ENCODE measurements at regions of chrX and their contacts with region 1.

Region 1: GRCh38 chrX:51743179-51743957 is at the start of gene GSPT2:
- DNase-seq: peak; percentile 83
- ATAC-seq: peak; percentile 97
- H3K4me3 Mint-ChIP-seq: peak within 1 kb of the TSS; percentile 85
- H3K27ac Mint-ChIP-seq: peak within 1 kb of the TSS; percentile 86
- H3K4me1 Mint-ChIP-seq: peaks cover 22% of the 10 kb centered on the region
- H3K27me3 Mint-ChIP-seq: no peaks in the 10 kb centered on the region
- total RNA-seq, gene GSPT2: 11.2 to 11.6 TPM

Region 2: DNA sequence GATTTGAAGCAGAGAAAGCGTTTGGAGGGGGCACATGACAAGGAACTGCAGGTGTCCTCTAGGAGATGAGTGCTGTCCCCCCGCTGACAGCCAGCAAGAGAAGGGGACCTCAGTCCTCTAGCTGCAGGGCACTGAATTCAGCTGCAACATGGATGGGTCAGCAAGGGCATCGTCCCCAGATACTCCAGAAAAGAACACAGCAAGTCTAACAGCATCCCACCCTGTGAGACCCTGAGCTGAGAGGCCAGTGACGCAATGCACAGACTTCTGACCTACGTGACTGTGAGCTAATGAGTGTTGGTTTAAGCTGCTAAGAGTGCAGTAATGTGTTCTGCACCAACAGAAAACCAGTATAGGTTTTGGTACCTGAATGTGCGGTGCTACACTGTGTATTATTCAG is 49.1 kb before region 1 on chrX:
- CTCF ChIA-PET with region 1: no interaction called
- POLR2A ChIA-PET with region 1: no interaction called
- intact Hi-C with region 1: no loop called
- DNase-seq: no peak
- ATAC-seq: no peak
- H3K4me3 Mint-ChIP-seq: no peak overlapping the region
- H3K27ac Mint-ChIP-seq: no peak overlapping the region
- H3K4me1 Mint-ChIP-seq: no peaks in the 10 kb centered on the region
- H3K27me3 Mint-ChIP-seq: no peaks in the 10 kb centered on the region

Region 3: GRCh38 chrX:51876441-51876840 is 133.1 kb after region 1 on chrX:
- CTCF ChIA-PET with region 1: no interaction called
- POLR2A ChIA-PET with region 1: no interaction called
- intact Hi-C with region 1: no loop called
- DNase-seq: no peak
- ATAC-seq: no peak
- H3K4me3 Mint-ChIP-seq: no peak overlapping the region
- H3K27ac Mint-ChIP-seq: no peak overlapping the region
- H3K4me1 Mint-ChIP-seq: peaks cover 7% of the 10 kb centered on the region
- H3K27me3 Mint-ChIP-seq: no peaks in the 10 kb centered on the region

Region 4: DNA sequence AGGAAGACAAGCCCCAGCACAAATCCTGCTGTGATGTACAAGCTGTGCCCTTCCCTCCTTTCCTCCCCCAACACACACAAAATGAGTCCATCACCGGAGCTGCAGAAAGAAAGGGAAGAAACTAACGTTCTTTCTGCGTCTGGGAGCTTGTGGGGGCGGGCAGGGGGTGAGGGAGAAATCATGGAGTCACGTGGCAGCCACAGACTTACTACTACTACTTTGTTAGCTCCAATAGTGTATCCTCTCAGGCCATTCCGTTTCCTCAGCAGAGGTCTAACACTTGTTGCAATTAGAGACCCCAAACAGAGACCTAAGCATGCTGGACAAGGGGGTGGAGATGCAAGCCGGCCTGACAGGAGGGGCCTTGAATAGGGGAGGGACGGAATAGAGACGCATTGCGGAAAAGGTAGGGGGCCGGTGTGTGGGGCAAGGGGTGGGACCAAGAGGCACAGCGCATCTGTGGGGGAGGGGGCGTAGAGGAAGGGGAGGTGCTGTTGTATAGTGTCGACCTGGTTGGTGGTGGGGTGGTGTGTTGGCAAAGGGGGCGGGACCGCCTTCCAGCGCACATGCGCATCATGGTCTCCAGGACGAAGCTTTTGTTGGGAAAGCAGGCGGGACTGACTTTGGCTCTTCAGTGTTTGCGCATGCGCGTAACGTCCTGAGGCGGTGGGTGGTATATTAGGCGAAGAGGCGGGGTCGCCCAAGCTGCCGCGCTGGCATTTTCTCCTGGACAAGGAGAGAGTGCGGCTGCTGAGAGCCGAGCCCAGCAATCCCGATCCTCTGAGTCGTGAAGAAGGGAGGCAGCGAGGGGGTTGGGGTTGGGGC is 149.8 kb after region 1 on chrX and contains the start of gene MAGED1:
- CTCF ChIA-PET with region 1: no interaction called
- POLR2A ChIA-PET with region 1: no interaction called
- intact Hi-C with region 1: loop called in 1 of 2 experiments (anchors 1 kb)
- DNase-seq: peak; percentile 90
- ATAC-seq: peak; percentile 97
- H3K4me3 Mint-ChIP-seq: peak within 1 kb of the TSS; percentile 92
- H3K27ac Mint-ChIP-seq: peak within 1 kb of the TSS; percentile 83
- H3K4me1 Mint-ChIP-seq: peaks cover 19% of the 10 kb centered on the region
- H3K27me3 Mint-ChIP-seq: no peaks in the 10 kb centered on the region
- total RNA-seq, gene MAGED1: 46.8 to 55.4 TPM